ENCODE measurements at regions of chr7 and their contacts with region 1.

Region 1: GRCh38 chr7:45033261-45033930 is 33.4 kb downstream of the CCM2 start:
- DNase-seq: no peak
- ATAC-seq: no peak
- H3K4me3 Mint-ChIP-seq: no peak overlapping the region
- H3K27ac Mint-ChIP-seq: peak overlapping the region; percentile 71
- H3K4me1 Mint-ChIP-seq: peaks cover 78% of the 10 kb centered on the region
- H3K27me3 Mint-ChIP-seq: no peaks in the 10 kb centered on the region
- CTCF ChIP-seq: no peak

Region 2: GRCh38 chr7:44727158-44727933 is 306.1 kb before region 1 on chr7:
- CTCF ChIA-PET with region 1: no interaction called
- POLR2A ChIA-PET with region 1: no interaction called
- intact Hi-C with region 1: no loop called
- DNase-seq: no peak
- ATAC-seq: no peak
- H3K4me3 Mint-ChIP-seq: no peak overlapping the region
- H3K27ac Mint-ChIP-seq: no peak overlapping the region
- H3K4me1 Mint-ChIP-seq: no peaks in the 10 kb centered on the region
- H3K27me3 Mint-ChIP-seq: no peaks in the 10 kb centered on the region
- CTCF ChIP-seq: no peak

Region 3: GRCh38 chr7:44905002-44905635 is 128.3 kb before region 1 on chr7:
- CTCF ChIA-PET with region 1: no interaction called
- POLR2A ChIA-PET with region 1: no interaction called
- intact Hi-C with region 1: no loop called
- DNase-seq: no peak
- ATAC-seq: no peak
- H3K4me3 Mint-ChIP-seq: no peak overlapping the region
- H3K27ac Mint-ChIP-seq: no peak overlapping the region
- H3K4me1 Mint-ChIP-seq: no peaks in the 10 kb centered on the region
- H3K27me3 Mint-ChIP-seq: peaks cover 5% of the 10 kb centered on the region
- CTCF ChIP-seq: no peak

Region 4: DNA sequence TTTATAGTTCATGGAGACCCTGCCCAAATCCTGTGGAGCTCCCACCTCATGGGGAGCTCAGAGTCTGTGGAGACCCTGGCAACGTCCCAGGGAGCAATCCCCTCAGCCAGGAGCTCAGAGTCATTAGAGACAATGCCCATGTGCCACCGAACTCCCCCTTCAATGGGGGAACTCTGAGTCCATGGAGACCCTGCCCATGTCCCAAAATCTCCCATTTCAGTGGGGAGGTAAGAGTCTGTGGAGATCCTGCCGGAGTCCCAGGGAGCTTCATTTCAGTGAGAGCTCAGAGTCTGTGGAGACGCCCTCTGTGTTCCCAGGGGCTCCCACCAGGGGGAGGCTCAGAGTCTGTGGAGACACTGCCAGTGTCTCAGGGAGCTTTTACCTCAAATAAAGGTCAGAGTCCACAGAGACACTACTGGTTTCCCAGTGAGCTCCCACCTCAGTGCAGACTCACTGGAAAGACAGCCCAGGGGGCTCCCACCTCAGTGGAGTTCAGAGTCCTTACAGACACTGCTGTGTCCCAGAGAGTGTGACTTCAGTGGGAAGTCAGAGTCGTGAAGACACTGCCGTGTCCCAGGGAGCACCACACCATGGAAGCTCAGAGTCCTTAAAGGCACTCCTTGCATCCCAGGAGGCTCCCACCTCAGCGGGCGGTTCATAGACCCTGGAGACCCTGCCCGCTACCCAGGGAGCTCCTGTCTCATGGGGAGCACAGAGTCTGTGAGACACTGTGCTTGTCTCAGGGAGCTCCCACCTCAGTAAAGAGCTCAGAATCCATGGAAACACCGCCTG is 59.6 kb before region 1 on chr7:
- CTCF ChIA-PET with region 1: interaction called, 22 read pairs
- POLR2A ChIA-PET with region 1: interaction called, 105 read pairs
- intact Hi-C with region 1: no loop called
- DNase-seq: no peak
- ATAC-seq: peak; percentile 26
- H3K4me3 Mint-ChIP-seq: no peak overlapping the region
- H3K27ac Mint-ChIP-seq: no peak overlapping the region
- H3K4me1 Mint-ChIP-seq: peaks cover 32% of the 10 kb centered on the region
- H3K27me3 Mint-ChIP-seq: no peaks in the 10 kb centered on the region
- CTCF ChIP-seq: no peak

Measured in activated B cell treated with CpG ODN at 0.5 μM for 24 hours (primary cell).